B cell (primary cell): ENCODE measurements at regions of chr1 and their contacts with region 1.

Region 1: GRCh38 chr1:167220537-167221125 is at the start of gene POU2F1:
- DNase-seq: peak; percentile 100
- ATAC-seq: peak; percentile 72
- H3K4me3 ChIP-seq: peak within 1 kb of the TSS; percentile 70 to 99 (median 88)
- H3K4me3 Mint-ChIP-seq: peak within 1 kb of the TSS; percentile 93
- H3K27ac ChIP-seq: peak within 1 kb of the TSS; percentile 92 to 96
- H3K27ac Mint-ChIP-seq: peak within 1 kb of the TSS; percentile 98
- H3K4me1 ChIP-seq: peaks cover 23 to 26% of the 10 kb centered on the region in 2 donors
- H3K4me1 Mint-ChIP-seq: peaks cover 42% of the 10 kb centered on the region
- H3K27me3 ChIP-seq: no peaks in the 10 kb centered on the region
- H3K27me3 Mint-ChIP-seq: no peaks in the 10 kb centered on the region
- CTCF ChIP-seq: peak; percentile 61
- total RNA-seq, gene POU2F1: 47.4 and 48.8 TPM in 2 replicates

Region 2: DNA sequence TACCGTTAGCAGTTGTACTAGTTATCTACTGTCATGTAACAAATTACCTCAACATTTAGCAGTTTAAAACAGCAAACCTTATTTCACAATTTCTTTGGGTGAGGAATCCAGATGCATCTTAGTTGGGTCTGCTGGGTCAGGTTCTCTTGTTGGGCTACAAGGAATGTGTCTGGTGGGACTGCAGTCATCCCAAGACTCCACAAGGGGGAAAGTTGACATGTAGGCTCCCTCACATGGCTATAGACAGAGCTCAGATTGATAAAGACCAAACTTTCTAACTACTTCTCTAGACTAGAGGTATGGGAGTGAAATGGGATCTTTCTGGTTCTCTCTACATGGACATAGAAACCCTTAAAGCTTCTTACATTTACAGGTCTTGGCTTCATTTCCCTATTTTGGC is 1232.4 kb before region 1 on chr1:
- CTCF ChIA-PET with region 1: no interaction called
- POLR2A ChIA-PET with region 1: no interaction called
- intact Hi-C with region 1: no loop called
- DNase-seq: no peak
- ATAC-seq: no peak
- H3K4me3 ChIP-seq: no peak overlapping the region
- H3K4me3 Mint-ChIP-seq: no peak overlapping the region
- H3K27ac ChIP-seq: no peak overlapping the region
- H3K27ac Mint-ChIP-seq: no peak overlapping the region
- H3K4me1 ChIP-seq: no peaks in the 10 kb centered on the region
- H3K4me1 Mint-ChIP-seq: no peaks in the 10 kb centered on the region
- H3K27me3 ChIP-seq: no peaks in the 10 kb centered on the region
- H3K27me3 Mint-ChIP-seq: peaks cover 8% of the 10 kb centered on the region
- CTCF ChIP-seq: no peak

Region 3: GRCh38 chr1:166838766-166839599 is 381.6 kb before region 1 on chr1 and contains the start of gene POGK:
- CTCF ChIA-PET with region 1: interaction called, 4 read pairs
- POLR2A ChIA-PET with region 1: interaction called, 4 read pairs
- intact Hi-C with region 1: loop called (anchors 1 kb)
- DNase-seq: peak; percentile 89
- ATAC-seq: peak; percentile 93
- H3K4me3 ChIP-seq: peak within 1 kb of the TSS; percentile 71 to 86 (median 71)
- H3K4me3 Mint-ChIP-seq: peak within 1 kb of the TSS; percentile 97
- H3K27ac ChIP-seq: peak within 1 kb of the TSS; percentile 83 to 89
- H3K27ac Mint-ChIP-seq: peak within 1 kb of the TSS; percentile 99
- H3K4me1 ChIP-seq: peaks cover 21 to 25% of the 10 kb centered on the region in 2 donors
- H3K4me1 Mint-ChIP-seq: peaks cover 31% of the 10 kb centered on the region
- H3K27me3 ChIP-seq: peaks cover 0 to 3% (median 0%) of the 10 kb centered on the region in 4 experiments
- H3K27me3 Mint-ChIP-seq: no peaks in the 10 kb centered on the region
- CTCF ChIP-seq: no peak
- total RNA-seq, gene POGK: 40.8 and 45.0 TPM in 2 replicates

Region 4: DNA sequence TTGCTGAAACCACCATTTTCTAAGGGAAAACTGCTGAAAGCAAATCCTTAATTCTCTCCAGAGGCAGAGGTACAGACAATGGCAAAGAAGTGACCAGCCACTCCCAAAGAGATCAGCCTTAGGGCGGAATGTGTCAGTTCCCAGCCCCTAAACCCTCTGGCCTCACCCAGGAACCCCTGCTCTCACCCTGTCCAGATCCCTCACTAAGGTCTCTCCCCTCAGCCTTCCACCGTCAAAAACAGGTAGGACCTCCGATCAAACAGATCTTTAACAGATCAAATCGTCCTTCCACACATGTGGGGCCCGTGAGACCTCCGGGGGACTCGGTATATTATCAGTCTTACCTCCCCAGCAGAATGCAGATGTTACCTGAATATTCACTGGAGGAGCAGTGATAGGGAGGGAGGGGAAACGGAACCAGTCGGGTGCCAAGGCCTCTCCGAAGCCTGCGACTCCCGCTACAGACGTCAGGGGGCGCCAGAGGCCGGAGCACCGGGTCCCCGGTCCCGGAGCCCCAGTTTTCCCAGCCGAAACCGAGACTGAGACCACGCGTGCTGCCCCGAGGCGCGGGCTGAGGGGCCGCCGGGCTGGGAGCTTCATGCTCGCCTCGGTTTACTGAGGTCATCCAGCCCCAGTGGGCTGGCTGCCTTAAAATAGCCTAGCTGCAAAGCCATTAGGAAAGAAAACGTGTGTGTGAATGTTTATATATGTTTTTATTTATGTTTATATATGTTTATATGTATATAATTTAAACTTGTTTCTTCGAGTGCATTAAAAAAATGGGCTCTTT is 154.1 kb before region 1 on chr1:
- CTCF ChIA-PET with region 1: interaction called, 8 read pairs
- POLR2A ChIA-PET with region 1: interaction called, 3 read pairs
- intact Hi-C with region 1: loop called (anchors 1 kb)
- DNase-seq: peak; percentile 83
- ATAC-seq: peak; percentile 99
- H3K4me3 ChIP-seq: peak overlapping the region in 1 of 5 experiments; percentile 20
- H3K4me3 Mint-ChIP-seq: no peak overlapping the region
- H3K27ac ChIP-seq: no peak overlapping the region
- H3K27ac Mint-ChIP-seq: no peak overlapping the region
- H3K4me1 ChIP-seq: peaks cover 0 to 7% of the 10 kb centered on the region in 2 donors
- H3K4me1 Mint-ChIP-seq: peaks cover 4% of the 10 kb centered on the region
- H3K27me3 ChIP-seq: no peaks in the 10 kb centered on the region
- H3K27me3 Mint-ChIP-seq: no peaks in the 10 kb centered on the region
- CTCF ChIP-seq: peak; percentile 98

Region 5: GRCh38 chr1:167430134-167430856 is 209.7 kb after region 1 on chr1:
- CTCF ChIA-PET with region 1: interaction called, 3 read pairs
- POLR2A ChIA-PET with region 1: interaction called, 4 read pairs
- intact Hi-C with region 1: loop called (anchors 5 kb)
- DNase-seq: peak; percentile 57
- ATAC-seq: peak; percentile 40
- H3K4me3 ChIP-seq: peak overlapping the region in 2 of 5 experiments; percentile 16 to 25
- H3K4me3 Mint-ChIP-seq: peak overlapping the region; percentile 84
- H3K27ac ChIP-seq: peak overlapping the region; percentile 71
- H3K27ac Mint-ChIP-seq: peak overlapping the region; percentile 97
- H3K4me1 ChIP-seq: peaks cover 37 to 54% of the 10 kb centered on the region in 2 donors
- H3K4me1 Mint-ChIP-seq: peaks cover 50% of the 10 kb centered on the region
- H3K27me3 ChIP-seq: peaks cover 0 to under 1% (median under 1%) of the 10 kb centered on the region in 4 experiments
- H3K27me3 Mint-ChIP-seq: no peaks in the 10 kb centered on the region
- CTCF ChIP-seq: no peak

Region 6: GRCh38 chr1:167553136-167554027 is 332.8 kb after region 1 on chr1 and contains the start of gene CREG1:
- CTCF ChIA-PET with region 1: no interaction called
- POLR2A ChIA-PET with region 1: interaction called, 4 read pairs
- intact Hi-C with region 1: loop called (anchors 1 kb)
- DNase-seq: peak; percentile 92
- ATAC-seq: peak; percentile 98
- H3K4me3 ChIP-seq: peak within 1 kb of the TSS; percentile 56 to 82 (median 68)
- H3K4me3 Mint-ChIP-seq: peak within 1 kb of the TSS; percentile 96
- H3K27ac ChIP-seq: no peak within 1 kb of the TSS
- H3K27ac Mint-ChIP-seq: peak within 1 kb of the TSS; percentile 82
- H3K4me1 ChIP-seq: peaks cover 10 to 23% of the 10 kb centered on the region in 2 donors
- H3K4me1 Mint-ChIP-seq: peaks cover 23% of the 10 kb centered on the region
- H3K27me3 ChIP-seq: no peaks in the 10 kb centered on the region
- H3K27me3 Mint-ChIP-seq: no peaks in the 10 kb centered on the region
- CTCF ChIP-seq: no peak
- total RNA-seq, gene CREG1: 8.1 and 8.4 TPM in 2 replicates

Region 7: DNA sequence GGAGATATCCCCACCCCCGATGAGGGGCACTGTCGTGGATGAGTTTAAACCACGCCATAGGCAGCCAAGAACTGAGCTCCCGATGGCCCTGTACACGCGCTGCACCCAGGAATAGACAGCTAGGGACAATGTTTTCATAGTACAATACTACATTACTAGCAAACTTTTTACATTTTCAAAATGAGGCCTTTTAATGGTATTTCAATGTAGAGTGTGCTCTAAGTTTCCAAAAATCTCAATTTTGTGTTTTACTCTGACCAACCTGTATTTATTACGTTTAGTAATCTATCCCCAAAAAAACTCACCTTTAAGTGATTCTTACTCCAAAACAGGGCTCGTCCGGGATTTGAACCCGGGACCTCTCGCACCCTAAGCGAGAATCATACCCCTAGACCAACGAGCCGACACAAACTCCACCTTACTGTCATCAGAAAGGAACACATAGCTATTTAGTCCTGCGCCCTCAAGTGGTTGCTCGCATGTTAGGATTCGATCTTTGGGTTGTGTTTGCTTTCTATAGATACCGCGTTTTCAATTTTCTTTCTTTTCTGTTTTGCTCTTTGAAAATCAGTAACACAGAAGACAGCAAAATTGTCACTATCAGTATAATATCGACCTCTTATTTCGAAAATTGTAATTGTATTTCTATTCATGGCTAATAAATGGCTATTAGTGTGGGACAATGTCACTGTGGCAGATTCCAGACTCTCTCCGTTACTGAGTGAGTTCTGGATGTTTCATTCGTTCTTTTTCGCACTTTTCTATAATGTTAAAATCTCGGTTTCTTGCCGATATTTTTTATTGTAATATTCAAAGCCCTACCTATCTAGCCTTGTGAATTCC is 494.7 kb after region 1 on chr1:
- CTCF ChIA-PET with region 1: interaction called, 5 read pairs
- POLR2A ChIA-PET with region 1: no interaction called
- intact Hi-C with region 1: loop called (anchors 2 kb)
- DNase-seq: peak; percentile 94
- ATAC-seq: peak; percentile 58
- H3K4me3 ChIP-seq: peak overlapping the region; percentile 80 to 94 (median 91)
- H3K4me3 Mint-ChIP-seq: peak overlapping the region; percentile 93
- H3K27ac ChIP-seq: peak overlapping the region in 1 of 2 donors; percentile 54
- H3K27ac Mint-ChIP-seq: peak overlapping the region; percentile 98
- H3K4me1 ChIP-seq: peaks cover 37 to 41% of the 10 kb centered on the region in 2 donors
- H3K4me1 Mint-ChIP-seq: peaks cover 44% of the 10 kb centered on the region
- H3K27me3 ChIP-seq: no peaks in the 10 kb centered on the region
- H3K27me3 Mint-ChIP-seq: no peaks in the 10 kb centered on the region
- CTCF ChIP-seq: peak; percentile 85